MCF 10A (cell line): ENCODE measurements at regions of chr1 and their contacts with region 1.

Region 1: DNA sequence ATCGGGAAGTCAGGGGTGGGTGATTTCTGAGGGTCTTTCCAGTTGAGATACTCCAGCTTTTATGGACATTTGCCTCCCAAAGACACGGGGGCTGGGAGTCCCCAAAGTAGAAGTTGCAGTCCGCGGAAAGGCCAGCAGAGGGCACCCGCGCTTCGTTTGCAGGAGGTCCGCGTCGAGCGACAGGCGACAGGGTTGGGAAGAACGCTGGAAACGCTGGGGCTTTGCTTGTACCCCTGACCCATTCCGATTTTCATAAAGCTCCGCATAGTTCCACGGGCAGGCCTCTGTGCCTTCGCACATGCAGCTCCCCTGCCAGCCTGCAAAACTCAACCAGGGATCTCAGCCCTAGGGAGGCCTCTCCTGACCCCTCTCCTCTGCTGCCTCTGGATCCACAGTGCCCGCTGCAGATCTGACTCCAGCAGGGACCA is 44.2 kb upstream of the LAPTM5 start:
- DNase-seq: peak; percentile 75
- H3K4me3 Mint-ChIP-seq: no peak overlapping the region
- H3K27ac Mint-ChIP-seq: no peak overlapping the region
- H3K4me1 Mint-ChIP-seq: peaks cover 50% of the 10 kb centered on the region
- H3K27me3 Mint-ChIP-seq: no peaks in the 10 kb centered on the region
- CTCF ChIP-seq: peak; percentile 94

Region 2: GRCh38 chr1:30675761-30676160 is 126.0 kb before region 1 on chr1:
- CTCF ChIA-PET with region 1: no interaction called
- POLR2A ChIA-PET with region 1: no interaction called
- intact Hi-C with region 1: no loop called
- DNase-seq: peak; percentile 62
- H3K4me3 Mint-ChIP-seq: no peak overlapping the region
- H3K27ac Mint-ChIP-seq: peak overlapping the region; percentile 88
- H3K4me1 Mint-ChIP-seq: peaks cover 24% of the 10 kb centered on the region
- H3K27me3 Mint-ChIP-seq: no peaks in the 10 kb centered on the region
- CTCF ChIP-seq: no peak

Region 3: DNA sequence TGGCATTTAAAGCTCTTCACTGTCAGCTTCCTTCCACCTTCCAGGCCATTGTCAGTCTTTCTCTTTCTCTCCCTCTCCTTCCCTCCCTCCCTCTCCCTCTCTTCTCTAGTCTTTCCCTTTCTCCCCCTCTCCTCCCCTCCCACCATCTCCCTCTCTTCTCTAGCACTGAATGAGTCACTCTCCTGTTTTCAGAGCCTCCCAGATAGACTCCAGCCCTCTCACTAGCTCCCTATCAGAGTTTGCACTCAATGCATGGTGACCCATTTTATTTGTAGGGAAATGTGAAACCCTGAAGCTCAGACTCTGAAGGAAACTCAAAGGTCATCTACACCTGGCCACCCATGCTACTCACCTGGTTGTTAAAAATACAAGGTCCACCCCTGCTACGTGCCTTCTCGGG is 74.0 kb before region 1 on chr1:
- CTCF ChIA-PET with region 1: interaction called, 11 read pairs
- POLR2A ChIA-PET with region 1: interaction called, 3 read pairs
- intact Hi-C with region 1: no loop called
- DNase-seq: no peak
- H3K4me3 Mint-ChIP-seq: no peak overlapping the region
- H3K27ac Mint-ChIP-seq: no peak overlapping the region
- H3K4me1 Mint-ChIP-seq: no peaks in the 10 kb centered on the region
- H3K27me3 Mint-ChIP-seq: no peaks in the 10 kb centered on the region
- CTCF ChIP-seq: no peak

Region 4: GRCh38 chr1:30816211-30817076 is 14.7 kb after region 1 on chr1:
- CTCF ChIA-PET with region 1: interaction called, 96 read pairs
- POLR2A ChIA-PET with region 1: interaction called, 4 read pairs
- intact Hi-C with region 1: no loop called
- DNase-seq: peak; percentile 80
- H3K4me3 Mint-ChIP-seq: no peak overlapping the region
- H3K27ac Mint-ChIP-seq: peak overlapping the region; percentile 78
- H3K4me1 Mint-ChIP-seq: peaks cover 11% of the 10 kb centered on the region
- H3K27me3 Mint-ChIP-seq: no peaks in the 10 kb centered on the region
- CTCF ChIP-seq: no peak

Region 5: GRCh38 chr1:30856260-30856790 is 54.5 kb after region 1 on chr1:
- CTCF ChIA-PET with region 1: interaction called, 15 read pairs
- POLR2A ChIA-PET with region 1: no interaction called
- intact Hi-C with region 1: no loop called
- DNase-seq: no peak
- H3K4me3 Mint-ChIP-seq: no peak overlapping the region
- H3K27ac Mint-ChIP-seq: no peak overlapping the region
- H3K4me1 Mint-ChIP-seq: peaks cover 21% of the 10 kb centered on the region
- H3K27me3 Mint-ChIP-seq: no peaks in the 10 kb centered on the region
- CTCF ChIP-seq: no peak

Region 6: DNA sequence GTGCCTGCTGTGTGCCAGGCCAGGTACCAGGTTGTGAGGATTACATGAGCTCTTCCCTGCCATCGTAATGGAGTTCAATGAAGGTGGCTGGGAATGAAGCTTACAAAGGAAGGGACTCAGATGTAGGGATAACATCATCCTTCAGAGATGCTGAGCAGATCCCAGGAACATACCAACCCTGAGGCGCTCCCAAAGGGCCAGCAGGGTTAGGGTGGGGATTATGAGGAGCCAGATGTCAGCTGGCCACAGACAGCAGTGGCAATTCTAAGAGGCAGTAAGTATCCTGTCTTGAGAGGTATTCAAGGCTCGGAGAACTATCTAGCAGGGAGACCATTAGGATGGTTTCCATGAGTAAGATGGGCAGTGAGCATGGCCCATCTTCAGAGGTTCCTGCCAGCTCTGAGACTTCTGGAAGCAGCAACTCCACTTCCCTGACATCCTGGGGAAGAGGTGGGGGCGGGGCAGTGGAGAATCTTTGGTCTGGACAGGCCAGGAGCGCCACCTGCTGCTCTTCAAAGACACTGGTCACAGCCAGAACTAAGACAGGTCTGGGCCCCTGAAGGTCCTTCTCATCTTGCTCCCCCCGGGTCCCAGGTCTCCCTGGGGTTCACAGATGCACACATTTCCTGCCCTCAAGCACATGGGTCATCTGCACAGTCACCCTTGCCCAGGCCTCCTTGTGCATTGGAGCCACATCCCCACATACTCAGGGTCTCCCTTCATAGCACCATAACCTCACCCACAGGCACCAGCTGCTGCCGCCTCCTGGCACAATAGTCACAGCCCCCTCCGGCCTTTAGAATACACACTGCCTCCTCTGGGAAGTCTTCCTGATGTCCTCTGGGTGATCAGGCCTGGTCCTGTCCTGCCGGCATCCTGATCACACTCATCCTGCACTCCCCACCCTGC is 109.5 kb after region 1 on chr1:
- CTCF ChIA-PET with region 1: interaction called, 494 read pairs
- POLR2A ChIA-PET with region 1: interaction called, 56 read pairs
- intact Hi-C with region 1: loop called (anchors 1 kb)
- DNase-seq: peak; percentile 91
- H3K4me3 Mint-ChIP-seq: no peak overlapping the region
- H3K27ac Mint-ChIP-seq: no peak overlapping the region
- H3K4me1 Mint-ChIP-seq: peaks cover 15% of the 10 kb centered on the region
- H3K27me3 Mint-ChIP-seq: no peaks in the 10 kb centered on the region
- CTCF ChIP-seq: peak; percentile 85

Region 7: GRCh38 chr1:30982937-30983336 is 181.2 kb after region 1 on chr1:
- CTCF ChIA-PET with region 1: interaction called, 10 read pairs
- POLR2A ChIA-PET with region 1: interaction called, 3 read pairs
- intact Hi-C with region 1: no loop called
- DNase-seq: no peak
- H3K4me3 Mint-ChIP-seq: no peak overlapping the region
- H3K27ac Mint-ChIP-seq: no peak overlapping the region
- H3K4me1 Mint-ChIP-seq: peaks cover 6% of the 10 kb centered on the region
- H3K27me3 Mint-ChIP-seq: no peaks in the 10 kb centered on the region
- CTCF ChIP-seq: no peak